ENCODE measurements at regions of chr22 and their contacts with region 1.

Region 1: DNA sequence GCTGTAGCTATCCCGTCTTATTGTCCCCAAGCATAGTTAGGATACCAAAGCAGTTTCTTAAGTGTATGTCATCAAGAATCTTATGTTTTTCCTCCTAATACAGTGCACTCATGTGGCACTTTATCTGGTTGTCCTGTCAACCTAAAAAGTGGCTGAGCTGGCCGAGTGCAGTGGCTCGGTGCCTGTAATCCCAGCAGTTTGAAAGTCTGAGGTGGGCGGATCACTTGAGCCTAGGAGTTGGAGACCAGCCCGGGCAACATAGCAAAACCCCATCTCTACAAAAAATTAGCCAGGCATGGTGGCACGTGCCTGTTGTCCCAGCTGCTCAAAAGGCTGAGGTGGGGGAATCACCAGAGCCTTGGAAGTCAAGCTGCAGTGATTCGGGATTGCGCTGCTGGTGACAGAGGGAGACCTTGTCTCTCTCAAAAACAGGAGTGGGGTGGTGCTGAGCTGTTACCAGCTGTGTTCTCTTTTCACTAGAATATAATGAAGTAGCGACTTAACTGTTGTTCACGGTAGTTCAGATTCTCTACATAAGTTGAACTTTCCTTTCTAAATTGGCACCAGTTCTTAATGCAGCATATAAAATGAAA is 48.1 kb downstream of the EP300 start:
- DNase-seq: no peak
- ATAC-seq: no peak
- H3K4me3 ChIP-seq: no peak overlapping the region
- H3K27ac ChIP-seq: no peak overlapping the region
- H3K4me1 ChIP-seq: no peaks in the 10 kb centered on the region
- H3K27me3 ChIP-seq: no peaks in the 10 kb centered on the region
- CTCF ChIP-seq: no peak

Region 2: DNA sequence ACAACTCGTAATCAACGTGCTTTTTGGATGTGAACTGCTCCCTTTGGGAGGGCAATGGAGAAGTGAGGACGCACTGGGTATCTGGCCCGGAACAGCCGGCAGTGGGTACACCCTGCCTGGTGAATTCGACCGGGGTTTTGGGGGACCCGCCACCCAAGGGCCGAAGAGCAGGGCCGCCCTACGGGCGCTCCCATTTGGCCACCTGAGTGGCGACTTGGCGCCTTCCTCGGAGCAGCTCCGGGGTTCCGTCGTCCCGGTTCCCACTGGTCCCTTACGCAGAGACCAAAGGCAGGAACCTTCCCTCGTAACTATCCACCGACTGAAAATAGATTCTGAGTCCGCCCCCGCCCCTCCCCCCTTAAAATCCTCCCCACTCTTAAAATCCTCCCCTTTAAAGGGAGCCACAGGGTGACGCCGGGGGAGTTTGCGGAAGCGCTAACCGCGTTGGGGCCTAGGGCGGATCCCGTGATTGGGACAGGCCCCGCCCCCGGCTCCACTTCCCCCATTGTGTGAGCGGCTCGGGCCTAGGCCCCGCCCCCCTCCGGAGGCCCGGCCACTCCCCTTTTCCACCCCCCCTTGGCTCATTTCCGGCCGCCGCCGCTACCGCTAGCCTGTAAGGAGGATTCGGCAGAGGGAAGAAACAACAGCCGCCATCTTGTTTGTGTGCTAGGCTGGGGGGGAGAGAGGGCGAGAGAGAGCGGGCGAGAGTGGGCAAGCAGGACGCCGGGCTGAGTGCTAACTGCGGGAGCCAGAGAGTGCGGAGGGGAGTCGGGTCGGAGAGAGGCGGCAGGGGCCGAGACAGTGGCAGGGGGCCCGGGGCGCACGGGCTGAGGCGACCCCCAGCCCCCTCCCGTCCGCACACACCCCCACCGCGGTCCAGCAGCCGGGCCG is 49.1 kb before region 1 on chr22:
- intact Hi-C with region 1: no loop called
- DNase-seq: peak; percentile 99 to 100
- ATAC-seq: peak; percentile 93 to 97 (median 96)
- H3K4me3 ChIP-seq: peak overlapping the region; percentile 98
- H3K27ac ChIP-seq: peak overlapping the region; percentile 100
- H3K4me1 ChIP-seq: peaks cover 26% of the 10 kb centered on the region
- H3K27me3 ChIP-seq: no peaks in the 10 kb centered on the region
- CTCF ChIP-seq: no peak

Region 3: GRCh38 chr22:41178425-41178975 is 38.0 kb after region 1 on chr22:
- intact Hi-C with region 1: loop called in 1 of 2 experiments (anchors 5 kb)
- DNase-seq: peak; percentile 52 to 82
- ATAC-seq: peak in 2 of 4 donors; percentile 24 to 40
- H3K4me3 ChIP-seq: no peak overlapping the region
- H3K27ac ChIP-seq: peak overlapping the region; percentile 46
- H3K4me1 ChIP-seq: peaks cover 35% of the 10 kb centered on the region
- H3K27me3 ChIP-seq: no peaks in the 10 kb centered on the region
- CTCF ChIP-seq: no peak

Region 4: GRCh38 chr22:41264408-41264941 is 124.0 kb after region 1 on chr22:
- intact Hi-C with region 1: no loop called
- DNase-seq: no peak
- ATAC-seq: no peak
- H3K4me3 ChIP-seq: no peak overlapping the region
- H3K27ac ChIP-seq: no peak overlapping the region
- H3K4me1 ChIP-seq: no peaks in the 10 kb centered on the region
- H3K27me3 ChIP-seq: no peaks in the 10 kb centered on the region
- CTCF ChIP-seq: no peak

Measured in psoas muscle (tissue), 8 donors.